ENCODE measurements at regions of chr12 and their contacts with region 1.

Region 1: DNA sequence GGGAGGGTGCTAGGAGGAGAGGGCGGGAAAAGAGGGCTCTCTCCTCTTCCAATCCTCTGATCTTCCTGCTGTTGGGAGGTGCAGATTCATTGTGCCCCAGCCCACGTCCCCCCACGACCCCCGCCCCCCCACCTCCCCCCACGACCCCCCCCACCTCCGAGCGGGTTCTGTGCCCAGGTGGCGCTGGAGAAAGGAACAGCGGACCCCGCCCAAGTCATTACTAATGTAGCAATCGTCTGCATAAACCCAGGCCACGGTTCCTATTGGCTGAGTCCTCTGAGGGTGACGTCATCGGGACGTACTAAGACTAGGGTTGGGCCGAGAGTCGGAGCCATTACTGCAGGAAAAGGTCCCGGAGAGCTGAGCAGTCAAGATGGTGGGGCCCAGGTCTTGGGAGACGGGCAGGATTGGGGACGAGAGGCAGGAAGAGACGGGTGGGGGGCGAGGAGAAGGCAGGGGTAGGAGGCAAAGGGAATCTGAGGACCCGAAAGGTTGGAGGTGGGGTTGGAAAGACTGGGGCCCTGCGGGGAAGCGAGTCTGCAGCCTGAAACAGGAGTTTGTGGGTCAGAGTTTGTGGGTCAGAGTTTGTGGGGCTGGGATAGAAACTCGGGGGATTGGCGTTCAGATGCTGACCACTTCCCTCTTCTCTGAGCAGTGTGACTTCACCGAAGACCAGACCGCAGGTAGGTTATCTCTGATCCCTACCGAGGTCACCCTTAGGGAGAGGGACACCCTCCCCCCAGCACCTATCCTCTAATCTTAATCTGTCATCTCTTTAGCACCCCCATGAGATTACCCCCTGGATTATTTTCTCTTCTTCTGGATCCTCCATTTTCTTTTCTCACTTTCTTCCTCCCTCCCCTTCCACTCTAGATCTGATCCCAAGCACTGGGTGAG is at the start of gene MYL6:
- DNase-seq: peak; percentile 98
- ATAC-seq: peak; percentile 87
- H3K4me3 Mint-ChIP-seq: peak within 1 kb of the TSS; percentile 95
- H3K27ac Mint-ChIP-seq: peak within 1 kb of the TSS; percentile 98
- H3K4me1 Mint-ChIP-seq: peaks cover 33% of the 10 kb centered on the region
- H3K27me3 Mint-ChIP-seq: no peaks in the 10 kb centered on the region
- CTCF ChIP-seq: no peak
- total RNA-seq, gene MYL6: 647 to 663 TPM

Region 2: GRCh38 chr12:56127888-56128669 is 30.2 kb before region 1 on chr12 and contains the start of gene ESYT1:
- CTCF ChIA-PET with region 1: interaction called, 12 read pairs
- POLR2A ChIA-PET with region 1: interaction called, 13 read pairs
- intact Hi-C with region 1: loop called (anchors 2 kb)
- DNase-seq: peak; percentile 99
- ATAC-seq: peak; percentile 92
- H3K4me3 Mint-ChIP-seq: peak within 1 kb of the TSS; percentile 84
- H3K27ac Mint-ChIP-seq: peak within 1 kb of the TSS; percentile 93
- H3K4me1 Mint-ChIP-seq: peaks cover 53% of the 10 kb centered on the region
- H3K27me3 Mint-ChIP-seq: no peaks in the 10 kb centered on the region
- CTCF ChIP-seq: no peak
- total RNA-seq, gene ESYT1: 154 to 160 TPM

Region 3: DNA sequence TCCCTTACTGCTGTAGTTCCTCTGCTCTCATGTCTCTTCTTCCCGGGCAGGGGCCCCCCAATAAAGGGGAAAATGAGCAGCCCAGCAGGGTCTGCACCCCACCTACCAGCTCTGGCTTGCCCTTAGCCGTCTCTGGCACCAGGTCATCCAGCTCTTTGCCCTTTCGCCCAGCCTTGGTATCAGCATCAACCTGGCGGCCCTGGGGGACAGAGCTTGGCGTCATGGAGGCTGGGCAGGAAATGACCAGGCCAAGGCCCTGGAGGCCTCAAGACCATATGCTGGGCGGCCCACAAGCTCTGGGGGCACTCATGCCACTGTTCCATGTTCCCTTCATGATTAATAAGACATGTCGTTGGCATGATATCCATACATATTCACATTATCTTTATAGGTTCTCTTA is 14.6 kb after region 1 on chr12:
- CTCF ChIA-PET with region 1: interaction called, 3 read pairs
- POLR2A ChIA-PET with region 1: interaction called, 51 read pairs
- intact Hi-C with region 1: no loop called
- DNase-seq: no peak
- ATAC-seq: no peak
- H3K4me3 Mint-ChIP-seq: no peak overlapping the region
- H3K27ac Mint-ChIP-seq: peak overlapping the region; percentile 30
- H3K4me1 Mint-ChIP-seq: no peaks in the 10 kb centered on the region
- H3K27me3 Mint-ChIP-seq: no peaks in the 10 kb centered on the region
- CTCF ChIP-seq: no peak

Region 4: GRCh38 chr12:56178347-56178746 is 20.1 kb after region 1 on chr12:
- CTCF ChIA-PET with region 1: interaction called, 3 read pairs
- POLR2A ChIA-PET with region 1: interaction called, 51 read pairs
- intact Hi-C with region 1: no loop called
- DNase-seq: no peak
- ATAC-seq: no peak
- H3K4me3 Mint-ChIP-seq: no peak overlapping the region
- H3K27ac Mint-ChIP-seq: no peak overlapping the region
- H3K4me1 Mint-ChIP-seq: no peaks in the 10 kb centered on the region
- H3K27me3 Mint-ChIP-seq: no peaks in the 10 kb centered on the region
- CTCF ChIP-seq: no peak